ENCODE measurements at regions of chr6 and their contacts with region 1.

Region 1: GRCh38 chr6:142474531-142475289 is 172.9 kb downstream of the ADGRG6 start:
- DNase-seq: peak in 4 of 5 donors; percentile 33 to 42 (median 40)
- H3K4me3 ChIP-seq: no peak overlapping the region
- H3K4me3 Mint-ChIP-seq: no peak overlapping the region
- H3K27ac ChIP-seq: no peak overlapping the region
- H3K27ac Mint-ChIP-seq: no peak overlapping the region
- H3K4me1 ChIP-seq: no peaks in the 10 kb centered on the region
- H3K4me1 Mint-ChIP-seq: peaks cover 0 to 5% (median 2%) of the 10 kb centered on the region in 4 donors
- H3K27me3 ChIP-seq: no peaks in the 10 kb centered on the region
- H3K27me3 Mint-ChIP-seq: no peaks in the 10 kb centered on the region

Region 2: DNA sequence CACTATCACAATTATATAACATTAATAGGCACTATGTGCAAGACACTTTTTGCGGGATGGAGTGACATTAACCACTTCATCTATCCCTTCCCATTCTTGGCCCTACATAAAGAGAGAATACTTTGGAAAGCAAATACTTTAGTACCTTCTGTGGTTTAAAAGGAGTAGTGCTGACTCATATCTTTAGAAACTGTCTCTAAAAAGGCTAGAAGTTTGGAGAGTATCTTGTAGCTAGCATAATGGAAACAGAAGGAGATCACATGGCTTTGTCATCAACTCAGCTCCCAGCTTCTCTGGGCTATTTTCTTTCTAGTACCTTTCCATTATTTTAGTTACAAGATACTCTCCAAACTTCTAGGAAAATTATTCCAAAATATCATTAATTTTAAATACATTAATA is 15.4 kb before region 1 on chr6:
- CTCF ChIA-PET with region 1: interaction called, 10 read pairs
- POLR2A ChIA-PET with region 1: no interaction called
- intact Hi-C with region 1: no loop called
- DNase-seq: no peak
- H3K4me3 ChIP-seq: no peak overlapping the region
- H3K4me3 Mint-ChIP-seq: no peak overlapping the region
- H3K27ac ChIP-seq: no peak overlapping the region
- H3K27ac Mint-ChIP-seq: no peak overlapping the region
- H3K4me1 ChIP-seq: no peaks in the 10 kb centered on the region
- H3K4me1 Mint-ChIP-seq: no peaks in the 10 kb centered on the region
- H3K27me3 ChIP-seq: no peaks in the 10 kb centered on the region
- H3K27me3 Mint-ChIP-seq: peaks cover 5 to 7% of the 10 kb centered on the region in 2 donors

Region 3: GRCh38 chr6:142485256-142485655 is 10.5 kb after region 1 on chr6:
- CTCF ChIA-PET with region 1: interaction called, 20 read pairs
- POLR2A ChIA-PET with region 1: no interaction called
- intact Hi-C with region 1: no loop called
- DNase-seq: no peak
- H3K4me3 ChIP-seq: no peak overlapping the region
- H3K4me3 Mint-ChIP-seq: no peak overlapping the region
- H3K27ac ChIP-seq: no peak overlapping the region
- H3K27ac Mint-ChIP-seq: no peak overlapping the region
- H3K4me1 ChIP-seq: no peaks in the 10 kb centered on the region
- H3K4me1 Mint-ChIP-seq: peaks cover 0 to 2% (median 0%) of the 10 kb centered on the region in 4 donors
- H3K27me3 ChIP-seq: no peaks in the 10 kb centered on the region
- H3K27me3 Mint-ChIP-seq: peaks cover 3 to 10% of the 10 kb centered on the region in 2 donors

Region 4: GRCh38 chr6:142566628-142567396 is 92.1 kb after region 1 on chr6:
- CTCF ChIA-PET with region 1: interaction called, 5 read pairs
- POLR2A ChIA-PET with region 1: no interaction called
- intact Hi-C with region 1: loop called (anchors 1 kb)
- DNase-seq: peak; percentile 47 to 49 (median 48)
- H3K4me3 ChIP-seq: no peak overlapping the region
- H3K4me3 Mint-ChIP-seq: peak overlapping the region in 2 of 8 donors; percentile 29 to 53
- H3K27ac ChIP-seq: no peak overlapping the region
- H3K27ac Mint-ChIP-seq: peak overlapping the region in 6 of 7 donors; percentile 24 to 64 (median 40)
- H3K4me1 ChIP-seq: peaks cover 52% of the 10 kb centered on the region
- H3K4me1 Mint-ChIP-seq: peaks cover 34 to 59% (median 51%) of the 10 kb centered on the region in 4 donors
- H3K27me3 ChIP-seq: no peaks in the 10 kb centered on the region
- H3K27me3 Mint-ChIP-seq: no peaks in the 10 kb centered on the region

Region 5: DNA sequence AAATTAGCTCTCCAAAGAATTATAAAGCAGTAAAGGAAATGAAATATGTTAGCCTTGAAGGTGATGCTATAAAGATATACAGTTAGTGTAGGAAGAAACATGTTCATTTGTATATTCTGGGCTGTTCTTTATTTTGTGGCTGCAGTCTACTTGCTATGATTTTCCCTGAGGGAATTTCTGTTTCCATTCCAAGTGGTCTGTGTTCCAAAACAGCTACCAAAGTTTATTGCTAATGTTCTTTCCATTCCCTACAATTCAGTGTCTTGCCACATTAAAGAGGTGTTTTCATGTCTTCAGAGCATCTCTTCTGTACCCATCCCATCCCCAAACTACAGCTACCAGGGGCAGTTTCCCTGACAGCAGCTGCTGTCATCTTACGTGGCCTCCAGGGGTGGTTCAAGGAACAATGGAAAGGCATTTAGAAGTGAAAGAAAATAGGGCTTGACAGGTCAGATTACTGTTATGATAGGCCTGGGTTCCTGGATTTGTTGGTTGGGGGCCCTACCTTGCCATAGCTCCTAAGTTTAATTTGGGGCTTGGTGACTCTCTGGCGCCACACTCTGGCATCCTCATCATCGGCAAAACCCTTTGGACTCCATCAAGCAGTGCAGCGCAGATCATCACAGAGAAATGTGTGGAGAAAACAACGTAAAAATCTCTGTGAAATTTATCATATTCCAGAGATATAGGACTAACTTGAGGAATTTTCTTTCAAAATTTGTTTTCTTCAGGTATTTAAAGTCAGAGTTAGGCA is 552.2 kb after region 1 on chr6:
- CTCF ChIA-PET with region 1: interaction called, 18 read pairs
- POLR2A ChIA-PET with region 1: no interaction called
- intact Hi-C with region 1: loop called (anchors 2 kb)
- DNase-seq: peak; percentile 28 to 47 (median 36)
- H3K4me3 ChIP-seq: no peak overlapping the region
- H3K4me3 Mint-ChIP-seq: no peak overlapping the region
- H3K27ac ChIP-seq: no peak overlapping the region
- H3K27ac Mint-ChIP-seq: peak overlapping the region in 2 of 7 donors; percentile 13 to 68
- H3K4me1 ChIP-seq: no peaks in the 10 kb centered on the region
- H3K4me1 Mint-ChIP-seq: peaks cover 0 to 7% (median under 1%) of the 10 kb centered on the region in 4 donors
- H3K27me3 ChIP-seq: no peaks in the 10 kb centered on the region
- H3K27me3 Mint-ChIP-seq: no peaks in the 10 kb centered on the region

Region 6: GRCh38 chr6:143427109-143427817 is 952.6 kb after region 1 on chr6:
- CTCF ChIA-PET with region 1: interaction called, 47 read pairs
- POLR2A ChIA-PET with region 1: interaction called, 3 read pairs
- intact Hi-C with region 1: loop called (anchors 1 kb)
- DNase-seq: peak; percentile 65 to 73 (median 70)
- H3K4me3 ChIP-seq: no peak overlapping the region
- H3K4me3 Mint-ChIP-seq: no peak overlapping the region
- H3K27ac ChIP-seq: no peak overlapping the region
- H3K27ac Mint-ChIP-seq: peak overlapping the region in 2 of 7 donors; percentile 15 to 81
- H3K4me1 ChIP-seq: no peaks in the 10 kb centered on the region
- H3K4me1 Mint-ChIP-seq: no peaks in the 10 kb centered on the region
- H3K27me3 ChIP-seq: no peaks in the 10 kb centered on the region
- H3K27me3 Mint-ChIP-seq: no peaks in the 10 kb centered on the region

Measured in CD4-positive, alpha-beta memory T cell (primary cell).